HCT116 (cell line): ENCODE measurements at regions of chr10 and their contacts with region 1.

Region 1: DNA sequence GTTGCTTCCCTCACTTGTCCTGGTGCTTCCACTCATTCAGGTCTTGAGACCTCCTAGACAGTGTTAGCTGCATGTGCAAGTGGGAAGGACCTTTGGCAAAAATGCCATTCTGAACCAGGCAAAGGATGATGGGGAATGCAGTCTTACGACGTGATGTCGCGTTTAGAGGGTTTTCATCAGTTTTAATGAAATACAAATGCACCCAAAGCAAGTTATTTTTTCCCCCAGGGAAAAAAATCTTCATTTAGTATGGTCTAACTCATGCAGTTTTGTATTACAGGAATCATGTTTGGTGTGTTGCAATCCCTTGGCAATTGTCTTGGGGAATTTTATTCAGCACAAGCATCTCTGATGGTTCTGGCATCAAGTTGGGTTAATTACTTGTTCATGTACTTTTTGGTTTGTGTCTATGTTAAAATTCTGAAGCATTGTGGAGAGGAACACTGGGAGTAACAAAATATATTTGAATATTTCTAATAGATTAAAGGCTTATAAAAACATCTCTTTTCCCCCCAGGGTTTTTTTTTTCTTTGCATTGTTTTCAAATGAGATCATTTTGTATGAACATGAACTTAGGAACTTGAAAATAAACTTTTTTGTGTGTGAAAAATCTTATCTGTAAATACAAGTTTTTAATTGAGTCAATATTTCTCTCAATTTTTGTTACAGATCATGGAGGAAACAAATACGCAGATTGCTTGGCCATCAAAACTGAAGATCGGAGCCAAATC is 188.9 kb downstream of the BICC1 start:
- DNase-seq: no peak
- ATAC-seq: no peak
- H3K4me3 ChIP-seq: no peak overlapping the region
- H3K27ac ChIP-seq: no peak overlapping the region
- H3K4me1 ChIP-seq: no peaks in the 10 kb centered on the region
- H3K27me3 ChIP-seq: peaks cover 14% of the 10 kb centered on the region; the same call in 1 of the 2 replicates
- CTCF ChIP-seq: no peak
- POLR2A ChIP-seq: no peak
- RAD21 ChIP-seq: no peak

Region 2: DNA sequence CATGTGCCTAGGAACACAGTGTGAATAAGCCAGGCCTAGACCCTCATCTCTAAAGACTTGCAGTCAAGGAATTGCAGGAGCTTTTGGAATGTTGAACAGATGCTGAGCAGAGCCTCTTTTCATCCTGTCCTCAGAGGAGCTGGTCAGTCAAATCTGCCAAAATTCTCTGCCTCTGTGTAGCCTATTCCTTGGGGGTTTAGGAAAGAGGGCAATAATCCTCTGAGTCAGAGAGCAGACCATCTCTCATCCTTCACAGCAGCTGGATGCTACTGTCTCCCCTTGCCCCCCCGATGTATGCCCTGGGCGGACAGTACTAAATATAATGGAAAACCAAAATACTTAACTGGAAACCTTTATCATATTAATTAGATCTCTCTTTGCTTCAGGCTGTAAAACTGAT is 136.3 kb before region 1 on chr10:
- CTCF ChIA-PET with region 1: no interaction called
- POLR2A ChIA-PET with region 1: no interaction called
- RAD21 ChIA-PET with region 1: no interaction called
- intact Hi-C with region 1: no loop called
- DNase-seq: no peak
- ATAC-seq: no peak
- H3K4me3 ChIP-seq: no peak overlapping the region
- H3K27ac ChIP-seq: no peak overlapping the region
- H3K4me1 ChIP-seq: no peaks in the 10 kb centered on the region
- H3K27me3 ChIP-seq: 0 out of 2 replicates have a peak, but pooled peaks cover 5% of the 10 kb centered on the region
- CTCF ChIP-seq: no peak
- POLR2A ChIP-seq: no peak
- RAD21 ChIP-seq: no peak

Region 3: DNA sequence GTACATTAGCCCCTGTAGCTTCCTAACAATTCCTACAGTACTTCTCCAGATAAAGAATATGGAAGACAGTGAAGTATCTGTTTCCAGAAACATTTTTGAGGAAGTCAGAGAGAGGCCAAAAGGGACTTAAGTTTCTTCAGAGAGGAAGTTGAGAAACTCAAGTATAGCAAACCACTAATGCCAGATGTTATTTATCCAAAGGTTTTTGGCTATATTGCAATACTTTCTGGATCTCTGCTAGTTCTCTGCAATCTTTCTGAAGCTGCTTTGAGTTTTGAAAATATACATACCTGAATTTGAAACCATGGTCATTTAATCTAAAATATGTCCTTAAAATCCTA is 124.2 kb before region 1 on chr10:
- CTCF ChIA-PET with region 1: no interaction called
- POLR2A ChIA-PET with region 1: no interaction called
- RAD21 ChIA-PET with region 1: no interaction called
- intact Hi-C with region 1: loop called (anchors 5 kb)
- DNase-seq: no peak
- ATAC-seq: no peak
- H3K4me3 ChIP-seq: no peak overlapping the region
- H3K27ac ChIP-seq: no peak overlapping the region
- H3K4me1 ChIP-seq: no peaks in the 10 kb centered on the region
- H3K27me3 ChIP-seq: peaks cover 28% of the 10 kb centered on the region
- CTCF ChIP-seq: no peak
- POLR2A ChIP-seq: no peak
- RAD21 ChIP-seq: no peak

Region 4: DNA sequence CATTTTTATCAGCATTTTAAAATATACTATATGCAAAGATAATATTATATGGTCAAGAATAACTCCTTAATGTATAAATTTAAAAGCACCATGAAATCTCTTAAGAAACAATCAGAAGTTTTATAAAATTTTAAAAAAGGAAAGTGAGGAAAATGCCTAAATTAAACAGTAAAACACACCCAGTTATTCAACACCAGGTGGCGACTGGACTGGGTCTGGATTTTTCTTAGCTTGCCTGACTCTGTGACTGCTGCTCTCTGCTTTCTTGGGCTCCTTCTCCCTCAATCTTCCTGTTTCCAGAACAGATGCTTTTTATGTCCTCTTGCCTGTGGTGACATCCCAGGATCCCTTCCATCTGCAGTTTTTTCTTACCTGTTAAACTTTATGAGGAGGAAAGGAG is 11.4 kb after region 1 on chr10:
- CTCF ChIA-PET with region 1: no interaction called
- POLR2A ChIA-PET with region 1: no interaction called
- RAD21 ChIA-PET with region 1: no interaction called
- intact Hi-C with region 1: loop called (anchors 1 kb)
- DNase-seq: peak; percentile 1
- ATAC-seq: no peak
- H3K4me3 ChIP-seq: no peak overlapping the region
- H3K27ac ChIP-seq: no peak overlapping the region
- H3K4me1 ChIP-seq: no peaks in the 10 kb centered on the region
- H3K27me3 ChIP-seq: peaks cover 10% of the 10 kb centered on the region; the same call in 1 of the 2 replicates
- CTCF ChIP-seq: peak in 2 of 3 experiments; percentile 18 to 37; a peak in 2 of 6 replicates
- POLR2A ChIP-seq: no peak
- RAD21 ChIP-seq: 0 out of 2 replicates have a peak, but pooled peaks have one; percentile 7